ENCODE measurements at regions of chr6 and their contacts with region 1.

Region 1: GRCh38 chr6:169701954-169702839 is at the starts of genes C6orf120 and WDR27:
- H3K4me3 Mint-ChIP-seq: peak within 1 kb of the TSS; percentile 87
- H3K27ac Mint-ChIP-seq: peak within 1 kb of the TSS; percentile 87
- H3K4me1 Mint-ChIP-seq: peaks cover 34% of the 10 kb centered on the region
- H3K27me3 Mint-ChIP-seq: no peaks in the 10 kb centered on the region

Region 2: DNA sequence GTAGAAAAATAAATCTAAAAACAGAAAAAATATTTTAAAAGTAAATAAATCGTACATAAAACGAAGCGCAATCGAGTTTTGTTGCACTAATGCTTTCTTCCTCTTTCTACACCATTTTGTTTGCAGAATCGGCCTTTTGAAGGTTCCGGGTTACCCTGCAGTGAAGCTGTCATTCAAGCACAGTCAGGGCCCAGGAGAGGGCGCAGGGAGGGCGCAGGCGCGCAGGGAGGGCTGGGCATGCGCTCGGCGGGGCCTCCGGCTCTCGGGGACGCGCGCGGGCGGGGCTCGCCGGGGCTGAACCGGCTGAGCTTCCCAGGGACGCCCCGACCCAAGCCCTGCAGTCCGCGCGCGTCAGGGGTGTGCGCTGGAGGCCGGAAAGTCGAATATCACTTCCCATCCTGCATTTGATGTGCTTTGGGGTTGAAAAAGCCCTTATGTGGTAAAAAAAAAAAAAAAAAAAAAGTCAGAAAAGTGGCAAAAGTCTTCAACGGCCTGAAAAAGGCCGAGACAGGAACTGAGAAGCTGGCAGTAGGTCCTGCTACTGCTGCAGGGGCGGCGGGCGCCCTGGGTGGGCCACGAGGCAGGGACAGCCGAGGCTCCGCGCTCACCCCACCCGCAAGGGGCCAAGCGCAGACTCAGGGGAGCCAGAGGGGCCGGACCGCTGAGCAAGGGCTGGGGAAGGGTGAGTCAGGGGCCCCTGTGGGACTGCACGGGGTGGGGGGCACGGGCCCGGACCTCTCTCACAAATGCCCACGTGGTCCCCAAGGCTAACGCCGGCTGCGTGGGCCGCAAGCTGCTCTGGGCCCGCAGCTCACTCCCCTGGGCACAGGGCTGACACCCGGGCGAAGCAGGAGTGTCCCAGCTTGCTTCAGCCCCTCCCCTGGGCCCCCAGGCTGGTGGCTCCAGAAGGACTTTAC is 489.0 kb before region 1 on chr6:
- intact Hi-C with region 1: loop called (anchors 5 kb)
- H3K4me3 Mint-ChIP-seq: peak overlapping the region; percentile 72
- H3K27ac Mint-ChIP-seq: peak overlapping the region; percentile 91
- H3K4me1 Mint-ChIP-seq: peaks cover 17% of the 10 kb centered on the region
- H3K27me3 Mint-ChIP-seq: no peaks in the 10 kb centered on the region

Region 3: GRCh38 chr6:169473663-169474062 is 228.5 kb before region 1 on chr6:
- intact Hi-C with region 1: no loop called
- H3K4me3 Mint-ChIP-seq: no peak overlapping the region
- H3K27ac Mint-ChIP-seq: no peak overlapping the region
- H3K4me1 Mint-ChIP-seq: no peaks in the 10 kb centered on the region
- H3K27me3 Mint-ChIP-seq: no peaks in the 10 kb centered on the region

Region 4: GRCh38 chr6:169654598-169655391 is 47.4 kb before region 1 on chr6:
- intact Hi-C with region 1: loop called (anchors 5 kb)
- H3K4me3 Mint-ChIP-seq: peak overlapping the region; percentile 84
- H3K27ac Mint-ChIP-seq: peak overlapping the region; percentile 81
- H3K4me1 Mint-ChIP-seq: peaks cover 13% of the 10 kb centered on the region
- H3K27me3 Mint-ChIP-seq: no peaks in the 10 kb centered on the region

Region 5: GRCh38 chr6:169723200-169723909 is 21.2 kb after region 1 on chr6:
- intact Hi-C with region 1: loop called (anchors 1 kb)
- H3K4me3 Mint-ChIP-seq: peak overlapping the region; percentile 97
- H3K27ac Mint-ChIP-seq: peak overlapping the region; percentile 94
- H3K4me1 Mint-ChIP-seq: peaks cover 19% of the 10 kb centered on the region
- H3K27me3 Mint-ChIP-seq: peaks cover 4% of the 10 kb centered on the region

Region 6: GRCh38 chr6:169741344-169741743 is 39.1 kb after region 1 on chr6:
- intact Hi-C with region 1: no loop called
- H3K4me3 Mint-ChIP-seq: no peak overlapping the region
- H3K27ac Mint-ChIP-seq: no peak overlapping the region
- H3K4me1 Mint-ChIP-seq: no peaks in the 10 kb centered on the region
- H3K27me3 Mint-ChIP-seq: peaks cover 3% of the 10 kb centered on the region

Region 7: GRCh38 chr6:169751242-169752073 is 49.3 kb after region 1 on chr6 and contains the starts of genes DYNLT2 and ERMARD:
- intact Hi-C with region 1: loop called (anchors 1 kb)
- H3K4me3 Mint-ChIP-seq: peak within 1 kb of the TSS; percentile 90
- H3K27ac Mint-ChIP-seq: peak within 1 kb of the TSS; percentile 96
- H3K4me1 Mint-ChIP-seq: peaks cover 20% of the 10 kb centered on the region
- H3K27me3 Mint-ChIP-seq: no peaks in the 10 kb centered on the region

Region 8: GRCh38 chr6:170306324-170307079 is 604.3 kb after region 1 on chr6 and contains the start of gene FAM120B:
- intact Hi-C with region 1: loop called (anchors 5 kb)
- H3K4me3 Mint-ChIP-seq: peak within 1 kb of the TSS; percentile 99
- H3K27ac Mint-ChIP-seq: peak within 1 kb of the TSS; percentile 97
- H3K4me1 Mint-ChIP-seq: peaks cover 50% of the 10 kb centered on the region
- H3K27me3 Mint-ChIP-seq: peaks cover 20% of the 10 kb centered on the region

Region 9: DNA sequence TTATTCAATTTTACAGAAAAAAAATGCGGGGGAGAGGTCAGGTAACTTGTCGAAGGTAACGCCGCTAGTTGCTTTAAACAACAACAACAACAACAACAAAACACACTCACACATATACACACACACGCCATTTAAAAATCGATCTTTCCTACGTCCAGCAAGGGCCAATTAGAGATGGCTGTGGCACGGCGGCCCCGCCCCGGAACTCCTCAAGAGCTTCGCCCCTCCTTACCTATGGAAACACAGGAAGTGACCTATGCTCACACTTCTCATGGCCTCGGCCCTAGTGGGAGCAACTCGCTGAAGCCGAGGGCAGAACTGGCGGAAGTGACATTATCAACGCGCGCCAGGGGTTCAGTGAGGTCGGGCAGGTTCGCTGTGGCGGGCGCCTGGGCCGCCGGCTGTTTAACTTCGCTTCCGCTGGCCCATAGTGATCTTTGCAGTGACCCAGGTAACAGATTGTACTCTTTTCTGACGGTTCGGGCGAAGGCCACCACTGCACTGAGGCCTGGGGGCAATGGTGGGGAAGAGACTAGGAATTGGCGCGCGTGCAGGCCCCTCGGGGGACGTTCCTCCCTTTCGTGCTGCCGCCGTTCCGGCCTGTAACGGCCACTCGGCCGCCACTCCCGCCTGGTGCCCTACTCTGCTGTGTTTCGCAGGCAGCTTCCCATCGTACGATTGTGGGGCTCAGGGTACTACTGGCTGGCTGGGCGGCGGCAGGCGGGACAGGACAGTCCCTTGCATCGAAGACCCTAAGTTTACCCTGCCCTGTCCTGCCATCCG is 852.0 kb after region 1 on chr6 and contains the start of gene TBP:
- intact Hi-C with region 1: loop called (anchors 2 kb)
- H3K4me3 Mint-ChIP-seq: no peak within 1 kb of the TSS
- H3K27ac Mint-ChIP-seq: no peak within 1 kb of the TSS
- H3K4me1 Mint-ChIP-seq: no peaks in the 10 kb centered on the region
- H3K27me3 Mint-ChIP-seq: no peaks in the 10 kb centered on the region

Measured in dendritic cell treated with granulocyte-macrophage colony-stimulating factor and Interleukin-4, amounts not matched to agents 40 ng/mL and 50 ng/mL, for 4 days (primary cell).